Sciatic nerve (tissue), 2 donors: ENCODE measurements at regions of chr11 and their contacts with region 1.

Region 1: DNA sequence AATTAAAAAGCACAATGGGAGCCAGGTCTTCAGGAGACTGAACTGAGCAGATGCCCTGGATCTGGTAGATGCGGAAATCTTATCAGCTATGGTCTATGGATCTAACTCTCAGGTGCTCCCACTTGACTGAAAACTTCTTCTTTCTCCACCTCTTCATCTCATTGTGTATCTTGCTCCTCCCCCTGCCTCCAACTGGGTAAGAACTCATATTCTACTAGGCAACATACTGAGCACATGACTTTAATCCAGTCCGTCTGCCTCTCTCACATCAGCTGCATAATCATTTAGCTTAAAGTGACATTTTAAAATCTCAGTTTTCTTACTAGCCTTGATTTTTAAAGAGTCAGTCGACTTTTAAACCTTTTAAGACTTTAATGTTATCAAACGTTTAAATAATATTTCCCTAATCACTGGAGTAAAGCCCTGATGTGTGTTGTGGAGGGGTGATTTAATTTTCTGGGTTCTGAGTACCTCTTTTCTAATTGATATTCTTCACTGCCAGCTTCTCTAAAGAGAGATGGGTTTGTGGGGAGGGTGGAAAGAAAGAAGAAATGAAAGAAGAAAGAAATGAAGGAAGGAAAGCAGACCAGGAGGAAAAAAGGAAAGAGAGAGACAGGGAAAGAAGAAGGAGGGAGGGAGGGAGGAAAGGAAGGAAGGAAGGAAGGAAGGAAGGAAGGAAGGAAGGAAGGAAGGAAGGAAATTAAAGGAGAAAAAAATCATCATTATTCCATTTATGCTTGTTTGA is 592.8 kb upstream of the ARHGAP42 start:
- DNase-seq: no peak
- ATAC-seq: no peak

Region 2: GRCh38 chr11:98756271-98756670 is 1338.0 kb before region 1 on chr11:
- intact Hi-C with region 1: loop called (anchors 5 kb)
- DNase-seq: no peak
- ATAC-seq: no peak